ENCODE measurements at regions of chr19 and their contacts with region 1.

Region 1: GRCh38 chr19:44657211-44657921 is 13.7 kb downstream of the PVR start:
- DNase-seq: peak; percentile 75 to 89 (median 89)
- ATAC-seq: peak; percentile 64 to 73
- H3K4me3 ChIP-seq: no peak overlapping the region
- H3K27ac ChIP-seq: no peak overlapping the region
- H3K4me1 ChIP-seq: peaks cover 2% of the 10 kb centered on the region
- H3K27me3 ChIP-seq: no peaks in the 10 kb centered on the region

Region 2: GRCh38 chr19:44570984-44571684 is 86.2 kb before region 1 on chr19:
- intact Hi-C with region 1: loop called (anchors 2 to 5 kb)
- DNase-seq: peak in 1 of 3 donors; percentile 26
- ATAC-seq: peak; percentile 81
- H3K4me3 ChIP-seq: no peak overlapping the region
- H3K27ac ChIP-seq: no peak overlapping the region
- H3K4me1 ChIP-seq: no peaks in the 10 kb centered on the region
- H3K27me3 ChIP-seq: no peaks in the 10 kb centered on the region

Region 3: DNA sequence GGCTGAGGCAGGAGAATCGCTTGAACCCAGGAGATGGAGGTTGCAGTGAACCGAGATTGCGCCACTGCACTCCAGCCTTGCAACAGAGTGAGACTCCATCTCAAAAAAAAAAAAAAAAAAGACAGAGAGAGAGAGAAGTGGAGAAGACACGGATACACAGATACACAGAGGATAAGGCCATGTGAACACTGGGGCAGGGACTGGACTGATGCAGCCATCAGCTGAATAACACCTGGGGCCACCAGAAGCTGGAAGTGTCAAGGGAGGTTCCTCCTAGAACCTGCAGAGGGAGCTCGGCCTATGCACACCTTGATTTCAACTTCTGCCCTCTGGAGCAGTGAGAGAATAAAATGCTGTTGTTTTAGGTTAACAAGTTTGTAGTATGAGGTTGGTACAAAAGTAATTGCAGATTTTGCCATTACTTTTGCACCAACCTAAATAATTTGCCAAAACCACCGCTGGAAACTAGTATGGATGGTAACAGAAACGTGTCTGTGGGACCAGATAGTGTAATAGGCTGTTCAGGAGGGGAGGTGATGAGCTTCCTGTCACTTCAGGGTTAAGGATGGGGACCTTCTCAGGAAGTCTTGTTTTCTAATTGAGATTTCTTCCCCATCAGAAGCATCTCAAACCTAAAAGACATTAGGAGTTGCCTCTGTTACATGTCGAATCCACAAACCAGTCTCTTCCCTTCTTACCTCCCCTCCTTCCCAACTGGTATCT is 80.4 kb before region 1 on chr19:
- intact Hi-C with region 1: loop called in 2 of 4 experiments (anchors 5 kb)
- DNase-seq: no peak
- ATAC-seq: peak; percentile 50 to 62
- H3K4me3 ChIP-seq: no peak overlapping the region
- H3K27ac ChIP-seq: no peak overlapping the region
- H3K4me1 ChIP-seq: no peaks in the 10 kb centered on the region
- H3K27me3 ChIP-seq: no peaks in the 10 kb centered on the region

Region 4: DNA sequence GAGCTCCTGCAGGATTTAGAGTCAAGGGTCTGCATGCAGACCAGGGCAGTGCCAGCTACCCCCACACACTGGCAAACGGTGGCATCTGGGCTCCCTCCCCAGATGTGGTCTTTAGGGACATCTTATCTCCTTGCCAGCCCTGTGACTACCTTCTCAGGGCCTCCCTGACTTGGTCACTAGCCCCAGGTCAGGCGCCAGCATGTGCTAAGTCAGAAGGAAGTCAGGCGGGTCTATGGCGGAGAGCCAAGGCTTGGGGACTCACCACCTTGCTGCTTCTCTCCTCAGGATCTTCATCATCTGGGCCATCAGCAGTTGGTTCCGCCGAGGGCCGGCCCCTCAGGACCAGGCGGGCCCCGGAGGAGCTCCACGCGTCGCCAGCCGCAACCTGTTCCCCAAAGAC is 315.4 kb after region 1 on chr19:
- intact Hi-C with region 1: no loop called
- DNase-seq: no peak
- ATAC-seq: no peak
- H3K4me3 ChIP-seq: no peak overlapping the region
- H3K27ac ChIP-seq: no peak overlapping the region
- H3K4me1 ChIP-seq: no peaks in the 10 kb centered on the region
- H3K27me3 ChIP-seq: no peaks in the 10 kb centered on the region

Region 5: GRCh38 chr19:45079063-45079910 is 421.9 kb after region 1 on chr19 and contains the start of gene GEMIN7:
- intact Hi-C with region 1: no loop called
- DNase-seq: peak; percentile 66 to 89 (median 89)
- ATAC-seq: peak; percentile 88 to 89
- H3K4me3 ChIP-seq: peak within 1 kb of the TSS; percentile 92
- H3K27ac ChIP-seq: peak within 1 kb of the TSS; percentile 73
- H3K4me1 ChIP-seq: peaks cover 3% of the 10 kb centered on the region
- H3K27me3 ChIP-seq: no peaks in the 10 kb centered on the region
- total RNA-seq, gene GEMIN7: 10.9 to 15.0 (median 12.8) TPM